Heart left ventricle (tissue), 16 donors: ENCODE measurements at regions of chr1 and their contacts with region 1.

Region 1: DNA sequence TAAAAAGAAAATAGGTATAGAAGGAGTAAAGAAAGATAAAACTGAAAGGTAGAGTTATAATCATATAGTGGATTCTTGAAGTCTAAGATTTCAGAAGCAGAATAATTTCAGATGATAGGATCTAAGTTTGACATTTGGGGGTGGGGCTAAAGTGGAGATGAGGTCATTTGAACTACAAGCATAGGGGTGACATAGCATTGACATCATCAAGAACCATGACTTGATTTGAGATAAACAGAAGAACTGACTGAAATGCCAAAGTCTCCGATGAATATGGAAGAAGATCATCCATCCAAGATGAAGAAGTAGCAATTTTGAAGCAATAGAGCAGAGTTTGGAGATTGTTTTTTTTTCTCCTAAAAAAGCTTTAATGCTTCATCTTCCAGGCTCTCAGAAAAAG is 122.3 kb downstream of the MACF1 start:
- DNase-seq: no peak
- ATAC-seq: no peak
- H3K4me3 ChIP-seq: no peak overlapping the region
- H3K27ac ChIP-seq: peak overlapping the region in 1 of 12 donors; percentile 63
- H3K4me1 ChIP-seq: peaks cover 0 to 3% (median 0%) of the 10 kb centered on the region in 12 donors
- H3K27me3 ChIP-seq: no peaks in the 10 kb centered on the region
- CTCF ChIP-seq: no peak
- POLR2A ChIP-seq: no peak

Region 2: DNA sequence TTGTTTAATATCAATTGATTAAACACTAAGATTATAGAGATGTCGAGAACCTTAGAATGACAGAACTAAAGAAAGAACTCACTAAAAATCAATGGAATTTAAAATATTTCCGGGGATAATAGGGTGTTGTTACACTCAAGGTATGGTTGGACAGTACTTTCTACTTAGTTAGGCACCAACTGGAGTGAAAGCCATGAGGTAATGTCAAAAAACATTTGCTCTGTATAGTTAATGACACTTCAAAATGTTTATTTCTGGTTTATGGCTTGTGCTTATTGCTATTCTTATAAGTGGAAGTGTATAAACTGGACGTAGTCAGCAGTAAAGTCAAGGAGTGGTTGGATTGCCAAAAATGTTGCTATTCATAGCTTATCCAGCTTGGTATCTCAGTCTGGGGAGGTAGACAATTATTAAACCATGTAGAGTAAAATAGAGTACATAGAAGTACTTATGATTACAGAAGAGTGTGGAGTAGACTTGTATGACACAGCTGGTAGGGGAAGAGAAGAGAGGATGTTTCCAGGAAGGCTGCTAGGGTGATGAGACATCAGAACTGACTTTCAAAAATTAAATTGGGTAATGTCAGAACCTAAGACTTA is 108.1 kb after region 1 on chr1:
- intact Hi-C with region 1: loop called in 2 of 10 experiments (anchors 10 kb)
- DNase-seq: no peak
- ATAC-seq: peak; percentile 84 to 98 (median 91)
- H3K4me3 ChIP-seq: no peak overlapping the region
- H3K27ac ChIP-seq: peak overlapping the region in 5 of 12 donors; percentile 4 to 32 (median 22)
- H3K4me1 ChIP-seq: peaks cover 0 to 14% (median 6%) of the 10 kb centered on the region in 12 donors
- H3K27me3 ChIP-seq: no peaks in the 10 kb centered on the region
- CTCF ChIP-seq: no peak
- POLR2A ChIP-seq: no peak

Region 3: DNA sequence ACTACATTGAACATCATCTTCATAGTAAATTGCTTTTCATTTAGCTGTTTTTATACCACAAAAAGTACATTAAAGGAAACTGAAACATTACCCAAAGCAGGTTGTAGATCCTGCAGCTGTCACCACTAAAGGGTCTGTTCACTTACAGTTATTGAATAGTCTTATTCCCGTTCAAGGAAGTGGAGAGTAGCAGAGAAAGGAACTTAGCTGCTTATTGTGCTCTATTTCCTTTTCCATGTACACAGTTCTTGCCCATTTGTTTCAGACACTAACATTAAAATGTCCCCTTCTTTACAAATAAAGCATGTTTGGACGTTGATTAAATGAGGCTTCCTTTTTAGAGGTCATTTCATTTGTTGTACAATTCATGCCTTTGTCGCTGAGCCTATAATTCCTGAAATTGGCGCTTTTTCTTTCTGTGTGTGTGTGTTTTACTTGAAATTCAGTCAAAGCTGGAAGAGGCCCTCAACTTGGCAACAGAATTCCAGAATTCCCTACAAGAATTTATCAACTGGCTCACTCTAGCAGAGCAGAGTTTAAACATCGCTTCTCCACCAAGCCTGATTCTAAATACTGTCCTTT is 120.2 kb after region 1 on chr1:
- intact Hi-C with region 1: loop called in 2 of 10 experiments (anchors 10 kb)
- DNase-seq: no peak
- ATAC-seq: no peak
- H3K4me3 ChIP-seq: no peak overlapping the region
- H3K27ac ChIP-seq: peak overlapping the region in 1 of 12 donors; percentile 6
- H3K4me1 ChIP-seq: peaks cover 0 to 9% (median 0%) of the 10 kb centered on the region in 12 donors
- H3K27me3 ChIP-seq: no peaks in the 10 kb centered on the region
- CTCF ChIP-seq: no peak
- POLR2A ChIP-seq: no peak

Region 4: DNA sequence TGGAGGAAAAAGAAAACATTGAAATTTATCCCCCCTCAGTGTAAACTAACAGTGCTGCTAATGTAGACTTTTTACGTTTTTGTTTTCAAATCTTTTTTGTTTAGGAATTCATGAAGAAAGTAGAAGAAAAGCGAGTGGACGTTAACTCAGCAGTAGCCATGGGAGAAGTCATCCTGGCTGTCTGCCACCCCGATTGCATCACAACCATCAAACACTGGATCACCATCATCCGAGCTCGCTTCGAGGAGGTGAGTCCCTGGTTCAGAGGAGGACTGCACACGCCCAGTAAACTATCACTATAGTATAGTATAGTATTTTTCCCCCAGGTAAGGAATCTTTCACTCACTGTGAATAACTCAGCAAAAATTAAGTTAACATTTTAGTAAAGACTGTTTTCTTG is 126.8 kb after region 1 on chr1:
- intact Hi-C with region 1: loop called in 2 of 10 experiments (anchors 10 kb)
- DNase-seq: peak in 3 of 5 donors; percentile 53 to 60 (median 55)
- ATAC-seq: peak in 2 of 4 donors; percentile 38 to 57
- H3K4me3 ChIP-seq: no peak overlapping the region
- H3K27ac ChIP-seq: no peak overlapping the region
- H3K4me1 ChIP-seq: peaks cover 0 to 9% (median 0%) of the 10 kb centered on the region in 12 donors
- H3K27me3 ChIP-seq: no peaks in the 10 kb centered on the region
- CTCF ChIP-seq: no peak
- POLR2A ChIP-seq: no peak